CD4-positive, alpha-beta memory T cell (primary cell): ENCODE measurements at regions of chr15 and their contacts with region 1.

Region 1: DNA sequence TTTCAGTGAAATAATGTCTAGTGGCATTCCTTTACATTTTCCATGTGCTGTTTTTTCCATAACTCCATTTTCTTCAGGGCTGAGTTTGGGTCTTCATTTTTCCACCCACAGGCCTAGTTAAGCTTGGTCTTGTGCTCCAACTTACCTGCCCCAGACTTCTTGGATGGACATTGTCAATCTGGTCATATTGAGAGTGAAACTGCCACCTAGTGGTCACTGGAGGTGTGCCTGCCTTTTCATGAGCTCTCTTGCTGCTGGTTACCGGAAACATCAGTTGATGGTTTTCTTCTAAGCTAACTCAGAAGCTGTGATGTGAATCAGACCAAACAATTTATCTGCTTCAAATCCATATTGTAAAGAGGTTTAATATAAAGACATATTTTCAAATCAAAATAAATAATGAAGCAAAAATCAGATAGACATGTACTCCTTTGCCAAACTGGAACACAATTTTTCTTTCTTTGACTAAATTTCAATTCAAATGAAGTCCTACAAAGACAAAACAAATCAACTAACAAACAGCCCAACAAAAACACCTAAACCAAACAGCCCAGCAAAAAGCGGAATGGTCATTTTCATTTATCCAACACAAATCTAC is 135.1 kb upstream of the RASGRP1 start:
- DNase-seq: peak; percentile 61 to 73 (median 67)
- H3K4me3 ChIP-seq: no peak overlapping the region
- H3K4me3 Mint-ChIP-seq: peak overlapping the region in 5 of 8 donors; percentile 1 to 66 (median 35)
- H3K27ac ChIP-seq: peak overlapping the region; percentile 4
- H3K27ac Mint-ChIP-seq: peak overlapping the region; percentile 48 to 93 (median 86)
- H3K4me1 ChIP-seq: peaks cover 64% of the 10 kb centered on the region
- H3K4me1 Mint-ChIP-seq: peaks cover 38 to 58% (median 50%) of the 10 kb centered on the region in 4 donors
- H3K27me3 ChIP-seq: no peaks in the 10 kb centered on the region
- H3K27me3 Mint-ChIP-seq: no peaks in the 10 kb centered on the region

Region 2: GRCh38 chr15:38453971-38454695 is 245.6 kb before region 1 on chr15 and contains the start of gene FAM98B:
- CTCF ChIA-PET with region 1: interaction called, 52 read pairs
- POLR2A ChIA-PET with region 1: interaction called, 31 read pairs
- intact Hi-C with region 1: no loop called
- DNase-seq: peak; percentile 80 to 88 (median 84)
- H3K4me3 ChIP-seq: peak within 1 kb of the TSS; percentile 88 to 95
- H3K4me3 Mint-ChIP-seq: peak within 1 kb of the TSS; percentile 95 to 99 (median 97)
- H3K27ac ChIP-seq: peak within 1 kb of the TSS; percentile 74
- H3K27ac Mint-ChIP-seq: peak within 1 kb of the TSS; percentile 94 to 98 (median 96)
- H3K4me1 ChIP-seq: peaks cover 23% of the 10 kb centered on the region
- H3K4me1 Mint-ChIP-seq: peaks cover 26 to 39% (median 32%) of the 10 kb centered on the region in 4 donors
- H3K27me3 ChIP-seq: no peaks in the 10 kb centered on the region
- H3K27me3 Mint-ChIP-seq: no peaks in the 10 kb centered on the region
- total RNA-seq, gene FAM98B: 22.0 to 26.3 TPM

Region 3: GRCh38 chr15:38490242-38490922 is 209.3 kb before region 1 on chr15:
- CTCF ChIA-PET with region 1: interaction called, 16 read pairs
- POLR2A ChIA-PET with region 1: interaction called, 8 read pairs
- intact Hi-C with region 1: no loop called
- DNase-seq: no peak
- H3K4me3 ChIP-seq: no peak overlapping the region
- H3K4me3 Mint-ChIP-seq: peak overlapping the region in 1 of 8 donors; percentile 2
- H3K27ac ChIP-seq: no peak overlapping the region
- H3K27ac Mint-ChIP-seq: peak overlapping the region; percentile 8 to 92 (median 64)
- H3K4me1 ChIP-seq: peaks cover 29% of the 10 kb centered on the region
- H3K4me1 Mint-ChIP-seq: peaks cover 28 to 34% (median 33%) of the 10 kb centered on the region in 4 donors
- H3K27me3 ChIP-seq: no peaks in the 10 kb centered on the region
- H3K27me3 Mint-ChIP-seq: no peaks in the 10 kb centered on the region

Region 4: GRCh38 chr15:38521316-38521715 is 178.4 kb before region 1 on chr15:
- CTCF ChIA-PET with region 1: interaction called, 17 read pairs
- POLR2A ChIA-PET with region 1: no interaction called
- intact Hi-C with region 1: no loop called
- DNase-seq: no peak
- H3K4me3 ChIP-seq: no peak overlapping the region
- H3K4me3 Mint-ChIP-seq: no peak overlapping the region
- H3K27ac ChIP-seq: no peak overlapping the region
- H3K27ac Mint-ChIP-seq: peak overlapping the region; percentile 57 to 87 (median 78)
- H3K4me1 ChIP-seq: peaks cover 39% of the 10 kb centered on the region
- H3K4me1 Mint-ChIP-seq: peaks cover 41 to 61% (median 51%) of the 10 kb centered on the region in 4 donors
- H3K27me3 ChIP-seq: no peaks in the 10 kb centered on the region
- H3K27me3 Mint-ChIP-seq: no peaks in the 10 kb centered on the region

Region 5: DNA sequence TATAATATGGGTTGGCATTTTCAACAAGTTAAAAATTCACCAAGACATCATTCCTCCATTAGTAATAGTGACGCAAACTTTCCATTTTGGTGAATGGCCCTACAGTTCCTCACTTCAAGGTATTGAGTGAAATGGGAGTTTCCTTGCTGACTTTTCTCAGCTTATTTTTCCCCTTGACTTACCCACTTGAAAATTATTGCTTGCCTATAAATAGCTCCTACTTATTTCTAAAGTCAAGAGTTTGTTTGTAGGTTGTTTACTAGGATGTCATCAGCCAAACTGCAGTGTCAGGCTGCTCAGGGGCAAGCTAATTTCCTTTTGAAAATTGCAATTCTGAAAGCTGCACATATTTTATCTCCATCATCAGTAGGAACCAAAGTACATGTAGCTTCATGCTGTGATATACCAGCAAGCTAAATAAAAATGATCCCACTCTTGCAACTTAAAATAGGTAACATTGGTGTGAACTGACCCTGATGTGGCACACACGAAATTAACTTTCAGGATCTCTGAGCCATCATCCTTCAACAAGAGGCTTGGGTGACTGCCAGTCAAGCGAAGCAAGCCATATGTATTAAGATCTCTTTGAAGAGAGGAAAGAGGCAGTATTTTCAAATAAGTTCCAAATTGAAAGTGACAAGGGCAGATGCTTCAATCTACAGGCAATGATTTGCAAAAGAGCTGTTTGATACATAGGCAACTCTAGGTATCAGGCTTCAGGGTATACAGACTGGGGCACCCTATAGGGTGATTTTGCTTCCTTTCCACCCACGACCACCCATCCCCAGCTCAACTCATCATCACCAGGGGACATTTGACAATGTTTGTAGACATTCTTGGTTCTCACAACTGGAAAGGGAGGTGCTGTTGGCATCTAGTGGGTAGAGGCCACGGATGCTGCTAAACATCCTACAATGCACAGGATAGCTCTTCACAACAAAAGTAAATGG is 68.3 kb before region 1 on chr15:
- CTCF ChIA-PET with region 1: interaction called, 10 read pairs
- POLR2A ChIA-PET with region 1: no interaction called
- intact Hi-C with region 1: no loop called
- DNase-seq: peak in 2 of 5 donors; percentile 15 to 26
- H3K4me3 ChIP-seq: no peak overlapping the region
- H3K4me3 Mint-ChIP-seq: peak overlapping the region in 7 of 8 donors; percentile 8 to 52 (median 26)
- H3K27ac ChIP-seq: no peak overlapping the region
- H3K27ac Mint-ChIP-seq: peak overlapping the region; percentile 49 to 88 (median 75)
- H3K4me1 ChIP-seq: peaks cover 25% of the 10 kb centered on the region
- H3K4me1 Mint-ChIP-seq: peaks cover 19 to 22% (median 20%) of the 10 kb centered on the region in 4 donors
- H3K27me3 ChIP-seq: no peaks in the 10 kb centered on the region
- H3K27me3 Mint-ChIP-seq: no peaks in the 10 kb centered on the region

Region 6: DNA sequence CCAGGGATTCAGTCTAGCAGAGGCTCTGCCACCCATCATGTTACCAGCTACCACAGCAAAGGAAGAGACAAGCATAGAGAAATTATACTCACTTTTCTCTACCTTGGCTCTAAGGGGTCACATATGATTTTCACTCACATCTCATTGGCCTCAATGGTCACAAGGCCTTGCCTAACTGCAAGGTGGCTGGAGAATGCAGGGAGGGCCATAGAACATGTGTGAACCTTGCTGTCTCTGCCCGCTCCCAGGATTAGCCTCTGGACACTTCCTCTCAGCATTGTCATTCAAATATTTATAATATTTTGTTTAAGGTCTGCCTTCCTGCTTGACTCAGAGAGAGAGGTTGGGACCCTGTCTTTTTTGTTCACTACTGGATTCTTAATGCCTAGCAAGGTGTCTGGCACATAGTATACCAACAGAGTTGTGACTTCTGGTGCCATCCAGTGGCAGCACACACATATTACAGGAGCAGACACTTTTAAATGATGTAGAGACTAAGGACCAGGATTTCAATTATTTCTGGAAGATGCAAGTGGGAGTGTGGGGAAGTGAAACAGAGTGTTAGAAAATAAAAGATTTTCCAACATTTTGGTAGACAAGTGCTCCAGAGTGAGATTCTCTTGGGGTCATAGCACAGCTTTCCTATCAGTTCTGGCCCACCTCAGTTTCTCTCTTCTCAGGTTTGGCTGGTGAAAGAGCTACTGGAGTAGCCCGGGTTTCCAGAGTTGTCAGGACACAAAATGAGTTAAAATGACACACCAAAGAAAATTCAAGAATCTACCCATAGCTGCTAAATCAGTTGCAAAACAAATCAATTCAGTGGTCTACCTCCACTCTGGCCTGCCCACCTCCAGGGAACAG is 16.1 kb before region 1 on chr15:
- CTCF ChIA-PET with region 1: interaction called, 388 read pairs
- POLR2A ChIA-PET with region 1: interaction called, 152 read pairs
- intact Hi-C with region 1: no loop called
- DNase-seq: peak; percentile 68 to 76 (median 73)
- H3K4me3 ChIP-seq: no peak overlapping the region
- H3K4me3 Mint-ChIP-seq: peak overlapping the region in 7 of 8 donors; percentile 27 to 77 (median 55)
- H3K27ac ChIP-seq: peak overlapping the region; percentile 31
- H3K27ac Mint-ChIP-seq: peak overlapping the region; percentile 78 to 96 (median 94)
- H3K4me1 ChIP-seq: peaks cover 65% of the 10 kb centered on the region
- H3K4me1 Mint-ChIP-seq: peaks cover 61 to 73% (median 63%) of the 10 kb centered on the region in 4 donors
- H3K27me3 ChIP-seq: no peaks in the 10 kb centered on the region
- H3K27me3 Mint-ChIP-seq: no peaks in the 10 kb centered on the region